H1 (cell line): ENCODE measurements at regions of chr1 and their contacts with region 1.

Region 1: GRCh38 chr1:22641906-22642636 is 1.4 kb upstream of the C1QC start:
- DNase-seq: peak in 1 of 2 experiments; percentile 97
- H3K4me3 ChIP-seq: no peak overlapping the region
- H3K27ac ChIP-seq: no peak overlapping the region
- H3K4me1 ChIP-seq: peaks cover 0 to 6% (median 4%) of the 10 kb centered on the region in 4 experiments; a peak in 4 of 7 replicates
- H3K27me3 ChIP-seq: no peaks in the 10 kb centered on the region; a peak in 1 of 7 replicates
- CTCF ChIP-seq: peak; percentile 94 to 95 (median 94)
- EP300 ChIP-seq: no peak
- POLR2A ChIP-seq: no peak
- RAD21 ChIP-seq: peak; percentile 97 to 98

Region 2: DNA sequence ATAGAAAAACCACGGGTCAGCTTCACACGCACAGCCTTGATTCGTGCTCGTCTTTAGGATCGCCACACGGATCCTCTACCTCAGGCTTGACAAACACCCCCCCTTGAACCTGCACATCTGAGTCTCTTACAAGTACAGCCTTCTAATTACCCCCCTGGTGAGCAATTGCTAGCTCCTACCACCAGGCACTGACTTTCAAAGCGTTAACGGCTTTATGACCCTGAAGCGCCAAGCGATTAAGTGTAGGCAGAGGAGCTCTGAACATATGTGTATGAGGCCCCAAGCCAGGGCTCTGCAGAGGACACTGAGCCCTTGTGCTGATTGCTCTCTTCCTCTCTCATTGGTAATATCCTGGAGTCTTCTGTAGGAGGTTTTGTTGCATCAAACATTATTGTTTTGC is 134.5 kb before region 1 on chr1:
- CTCF ChIA-PET with region 1: interaction called, 20 read pairs
- POLR2A ChIA-PET with region 1: no interaction called
- DNase-seq: no peak
- H3K4me3 ChIP-seq: no peak overlapping the region
- H3K27ac ChIP-seq: no peak overlapping the region
- H3K4me1 ChIP-seq: no peaks in the 10 kb centered on the region
- H3K27me3 ChIP-seq: no peaks in the 10 kb centered on the region
- CTCF ChIP-seq: no peak
- EP300 ChIP-seq: no peak
- POLR2A ChIP-seq: no peak
- RAD21 ChIP-seq: no peak

Region 3: DNA sequence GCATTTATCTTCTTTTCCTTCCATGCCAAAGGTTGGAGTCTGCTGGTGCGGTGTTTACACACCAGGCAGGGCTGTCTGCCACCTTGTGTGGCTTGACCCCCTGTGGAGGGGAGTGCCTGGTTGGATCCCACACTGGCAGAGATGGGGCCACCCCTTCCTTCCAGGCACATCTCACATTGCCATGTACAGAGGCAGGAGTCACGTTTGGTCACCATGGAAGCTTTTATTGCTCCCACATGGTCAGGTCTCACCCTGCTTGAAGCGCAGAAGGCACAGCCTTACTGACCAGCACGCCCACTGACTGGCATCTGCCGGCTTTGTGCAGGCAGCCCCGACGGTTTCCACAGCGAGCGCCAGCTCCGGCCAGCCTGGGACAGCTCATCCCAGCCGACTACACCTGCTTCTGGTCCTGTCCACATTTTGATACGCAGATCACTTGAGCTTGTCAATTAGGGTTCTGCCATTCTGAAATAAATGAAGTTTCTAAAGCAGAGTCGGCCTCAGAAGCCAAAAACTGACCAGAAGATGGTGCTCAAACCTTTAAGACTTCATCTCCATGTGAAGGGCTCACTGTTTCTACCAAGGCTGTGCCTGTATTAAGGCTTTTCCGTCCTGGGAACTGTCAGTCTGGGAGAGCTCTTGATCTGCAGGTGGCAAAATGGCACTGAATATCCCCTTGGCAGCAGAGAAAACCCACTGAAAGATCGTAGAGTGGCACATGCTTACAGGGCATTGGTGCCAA is 114.3 kb before region 1 on chr1:
- CTCF ChIA-PET with region 1: interaction called, 70 read pairs
- POLR2A ChIA-PET with region 1: interaction called, 4 read pairs
- DNase-seq: no peak
- H3K4me3 ChIP-seq: no peak overlapping the region
- H3K27ac ChIP-seq: no peak overlapping the region
- H3K4me1 ChIP-seq: no peaks in the 10 kb centered on the region
- H3K27me3 ChIP-seq: no peaks in the 10 kb centered on the region
- CTCF ChIP-seq: peak in 2 of 3 experiments; percentile 57 to 66; a peak in 3 of 4 replicates
- EP300 ChIP-seq: no peak
- POLR2A ChIP-seq: no peak
- RAD21 ChIP-seq: peak; percentile 79 to 87

Region 4: DNA sequence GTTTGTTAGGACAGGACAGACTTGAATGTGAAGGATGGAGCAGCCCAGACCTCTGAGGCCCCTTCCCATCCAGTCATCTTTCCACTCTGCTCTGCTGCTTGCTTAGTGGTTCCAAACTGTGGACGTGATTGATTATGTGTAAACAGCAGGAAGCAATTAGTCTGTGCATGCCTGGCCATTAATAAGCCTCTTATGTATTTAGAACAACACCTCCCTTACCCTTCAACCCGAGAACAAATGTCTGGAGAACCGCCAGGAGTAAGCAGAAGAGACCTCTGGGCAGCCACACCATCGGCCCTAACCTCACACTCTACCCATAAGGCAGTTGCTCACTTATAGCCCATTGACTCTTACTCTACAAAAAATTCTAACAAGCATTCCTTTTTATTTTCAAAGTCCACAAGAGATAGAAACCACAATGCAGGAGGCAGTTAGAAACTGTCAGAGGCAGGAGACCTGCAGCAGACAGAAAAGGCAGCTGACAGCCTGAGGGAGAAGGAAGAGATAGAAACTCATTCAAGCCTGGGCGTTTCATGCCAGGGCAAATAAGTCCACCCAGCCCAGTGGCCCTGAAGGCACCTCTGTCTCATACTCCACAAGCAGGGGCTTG is 84.6 kb before region 1 on chr1:
- CTCF ChIA-PET with region 1: interaction called, 39 read pairs
- POLR2A ChIA-PET with region 1: no interaction called
- DNase-seq: no peak
- H3K4me3 ChIP-seq: no peak overlapping the region
- H3K27ac ChIP-seq: no peak overlapping the region
- H3K4me1 ChIP-seq: peaks cover 0 to 36% (median 19%) of the 10 kb centered on the region in 4 experiments; a peak in 6 of 7 replicates
- H3K27me3 ChIP-seq: peaks cover 6 to 16% (median 7%) of the 10 kb centered on the region in 4 experiments
- CTCF ChIP-seq: no peak
- EP300 ChIP-seq: no peak
- POLR2A ChIP-seq: no peak
- RAD21 ChIP-seq: no peak

Region 5: DNA sequence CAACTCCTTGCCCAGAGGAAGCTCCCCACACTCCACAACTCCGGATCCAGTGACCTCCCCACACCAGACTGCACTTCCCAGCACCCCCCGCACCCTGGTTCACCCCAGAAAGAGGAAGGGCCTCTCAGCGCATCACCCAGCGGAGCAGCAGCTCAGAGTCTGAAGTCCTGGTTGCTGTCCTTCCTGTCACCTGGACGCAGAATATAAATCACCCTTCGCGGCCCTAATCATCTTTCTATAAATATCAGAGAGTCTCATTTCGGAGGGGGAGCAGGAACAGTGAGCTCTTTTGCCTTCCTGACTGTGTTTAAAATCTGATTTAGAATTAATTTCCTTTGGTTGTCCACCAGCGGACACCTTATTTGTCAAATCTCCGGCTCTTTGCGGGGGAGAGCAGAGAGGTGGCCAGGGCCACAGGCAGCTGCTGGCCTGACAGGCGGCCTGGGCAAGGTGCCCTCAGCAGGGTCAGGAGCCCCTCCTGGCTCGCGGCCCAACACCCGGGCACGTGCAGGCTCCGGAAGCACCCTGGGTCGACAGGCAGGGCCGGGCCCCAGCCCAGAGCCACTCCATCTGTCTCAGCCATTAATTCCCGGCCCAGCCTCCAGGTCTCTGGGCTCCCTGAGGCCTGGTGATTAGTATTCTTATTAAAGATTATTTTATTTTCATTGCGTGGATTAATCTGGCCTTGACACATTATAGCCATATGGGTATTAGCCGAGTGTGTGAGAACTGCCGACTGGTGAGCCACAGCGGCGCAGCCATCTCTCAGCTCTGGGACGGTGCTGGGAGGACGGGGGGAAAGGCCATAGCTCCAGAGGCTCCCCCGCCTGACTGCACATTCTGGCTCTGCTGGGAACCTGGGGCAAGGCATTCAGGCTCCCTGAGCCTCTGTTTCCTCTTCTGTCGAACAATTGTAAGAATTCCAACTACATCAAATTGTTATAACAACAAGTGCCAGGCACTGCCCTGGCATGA is 59.1 kb before region 1 on chr1:
- CTCF ChIA-PET with region 1: interaction called, 17 read pairs
- POLR2A ChIA-PET with region 1: no interaction called
- DNase-seq: no peak
- H3K4me3 ChIP-seq: no peak overlapping the region
- H3K27ac ChIP-seq: no peak overlapping the region
- H3K4me1 ChIP-seq: no peaks in the 10 kb centered on the region
- H3K27me3 ChIP-seq: no peaks in the 10 kb centered on the region
- CTCF ChIP-seq: no peak
- EP300 ChIP-seq: no peak
- POLR2A ChIP-seq: no peak
- RAD21 ChIP-seq: no peak

Region 6: DNA sequence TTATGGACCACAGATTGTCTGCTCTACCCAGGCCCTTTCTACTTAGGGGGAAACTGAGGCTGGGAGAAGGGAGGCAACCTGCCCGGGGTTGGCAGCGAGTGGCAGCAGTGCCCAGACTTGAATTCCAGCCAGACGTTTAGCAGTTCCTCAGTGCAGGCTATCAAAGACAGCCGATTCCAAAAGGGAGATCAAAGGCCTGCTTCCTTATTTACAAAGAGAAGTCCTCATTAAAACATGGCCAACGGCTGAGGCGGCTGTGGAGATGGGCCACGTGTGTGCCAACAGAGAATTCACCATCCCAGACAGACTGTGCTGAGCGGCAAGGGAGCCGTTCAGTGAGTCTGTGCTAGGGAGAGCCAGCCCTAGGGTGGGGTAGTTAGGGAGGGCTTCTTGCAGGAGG is 38.7 kb after region 1 on chr1:
- CTCF ChIA-PET with region 1: no interaction called
- POLR2A ChIA-PET with region 1: no interaction called
- DNase-seq: no peak
- H3K4me3 ChIP-seq: no peak overlapping the region
- H3K27ac ChIP-seq: no peak overlapping the region
- H3K4me1 ChIP-seq: peaks cover 0 to 10% (median 4%) of the 10 kb centered on the region in 4 experiments; a peak in 2 of 7 replicates
- H3K27me3 ChIP-seq: no peaks in the 10 kb centered on the region
- CTCF ChIP-seq: no peak
- EP300 ChIP-seq: no peak
- POLR2A ChIP-seq: no peak
- RAD21 ChIP-seq: no peak